ENCODE measurements at regions of chr12 and their contacts with region 1.

Region 1: GRCh38 chr12:112035219-112035765 is 22.1 kb downstream of the ERP29 start:
- DNase-seq: no peak
- H3K4me3 ChIP-seq: no peak overlapping the region
- H3K27ac ChIP-seq: no peak overlapping the region
- H3K4me1 ChIP-seq: no peaks in the 10 kb centered on the region
- H3K27me3 ChIP-seq: no peaks in the 10 kb centered on the region
- CTCF ChIP-seq: no peak

Region 2: GRCh38 chr12:111937429-111937828 is 97.9 kb before region 1 on chr12:
- CTCF ChIA-PET with region 1: no interaction called
- POLR2A ChIA-PET with region 1: no interaction called
- intact Hi-C with region 1: no loop called
- DNase-seq: no peak
- H3K4me3 ChIP-seq: no peak overlapping the region
- H3K27ac ChIP-seq: no peak overlapping the region
- H3K4me1 ChIP-seq: no peaks in the 10 kb centered on the region
- H3K27me3 ChIP-seq: no peaks in the 10 kb centered on the region
- CTCF ChIP-seq: no peak

Region 3: GRCh38 chr12:112087055-112087850 is 52.0 kb after region 1 on chr12:
- CTCF ChIA-PET with region 1: no interaction called
- POLR2A ChIA-PET with region 1: no interaction called
- intact Hi-C with region 1: loop called (anchors 5 kb)
- DNase-seq: no peak
- H3K4me3 ChIP-seq: no peak overlapping the region
- H3K27ac ChIP-seq: no peak overlapping the region
- H3K4me1 ChIP-seq: no peaks in the 10 kb centered on the region
- H3K27me3 ChIP-seq: no peaks in the 10 kb centered on the region
- CTCF ChIP-seq: no peak; the same call in 1 of the 2 replicates

Measured in A673 (cell line).